ENCODE measurements at regions of chr4 and their contacts with region 1.

Region 1: GRCh38 chr4:2954358-2955185 is 8.6 kb downstream of the NOP14 start:
- DNase-seq: peak; percentile 62
- H3K4me3 Mint-ChIP-seq: peak overlapping the region; percentile 31
- H3K27ac Mint-ChIP-seq: peak overlapping the region; percentile 95
- H3K4me1 Mint-ChIP-seq: peaks cover 52% of the 10 kb centered on the region
- H3K27me3 Mint-ChIP-seq: no peaks in the 10 kb centered on the region

Region 2: DNA sequence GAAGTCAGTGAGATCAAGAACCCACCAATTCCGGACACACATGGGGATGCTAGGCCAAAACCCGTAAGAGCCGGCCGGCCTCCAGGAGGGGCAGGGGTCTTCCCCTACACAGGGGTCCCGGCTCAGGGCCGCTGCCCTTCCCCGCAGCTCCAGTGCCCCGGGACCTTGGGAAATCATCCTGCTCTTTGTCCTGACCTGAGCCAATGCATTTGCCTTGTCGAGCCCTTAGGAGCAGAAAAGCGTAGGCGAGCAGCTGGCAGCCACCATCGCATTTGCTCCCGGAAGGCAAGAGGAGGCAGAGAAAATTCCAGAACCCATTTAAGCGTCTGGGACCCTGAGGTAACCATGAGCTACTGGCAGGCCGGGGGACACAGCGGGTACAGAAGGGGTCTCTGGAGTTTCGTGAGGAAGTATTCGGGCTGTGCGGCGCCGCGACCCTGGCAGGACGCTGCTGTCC is 191.0 kb before region 1 on chr4:
- CTCF ChIA-PET with region 1: interaction called, 16 read pairs
- DNase-seq: no peak
- H3K4me3 Mint-ChIP-seq: peak overlapping the region; percentile 71
- H3K27ac Mint-ChIP-seq: no peak overlapping the region
- H3K4me1 Mint-ChIP-seq: peaks cover 12% of the 10 kb centered on the region
- H3K27me3 Mint-ChIP-seq: peaks cover 35% of the 10 kb centered on the region

Region 3: GRCh38 chr4:2934813-2935761 is 19.5 kb before region 1 on chr4:
- CTCF ChIA-PET with region 1: interaction called, 24 read pairs
- DNase-seq: peak; percentile 97
- H3K4me3 Mint-ChIP-seq: peak overlapping the region; percentile 84
- H3K27ac Mint-ChIP-seq: peak overlapping the region; percentile 90
- H3K4me1 Mint-ChIP-seq: peaks cover 52% of the 10 kb centered on the region
- H3K27me3 Mint-ChIP-seq: no peaks in the 10 kb centered on the region

Region 4: GRCh38 chr4:3193531-3194203 is 239.1 kb after region 1 on chr4:
- CTCF ChIA-PET with region 1: no interaction called
- DNase-seq: no peak
- H3K4me3 Mint-ChIP-seq: no peak overlapping the region
- H3K27ac Mint-ChIP-seq: peak overlapping the region; percentile 26
- H3K4me1 Mint-ChIP-seq: peaks cover 68% of the 10 kb centered on the region
- H3K27me3 Mint-ChIP-seq: no peaks in the 10 kb centered on the region

Measured in activated naive CD4-positive, alpha-beta T cell treated with anti-CD3 and anti-CD28 coated beads, Interleukin-2, amount 10 ng/mL, durations not matched to agents 7 days and 5 days (primary cell).